CD4-positive, alpha-beta T cell (primary cell): ENCODE measurements at regions of chr5 and their contacts with region 1.

Region 1: GRCh38 chr5:90440644-90441043 is 31.1 kb upstream of the CETN3 start:
- DNase-seq: no peak
- ATAC-seq: no peak
- H3K4me3 ChIP-seq: no peak overlapping the region
- H3K4me3 Mint-ChIP-seq: no peak overlapping the region
- H3K27ac ChIP-seq: no peak overlapping the region
- H3K27ac Mint-ChIP-seq: no peak overlapping the region
- H3K4me1 ChIP-seq: peaks cover 3% of the 10 kb centered on the region
- H3K4me1 Mint-ChIP-seq: no peaks in the 10 kb centered on the region
- H3K27me3 ChIP-seq: no peaks in the 10 kb centered on the region
- H3K27me3 Mint-ChIP-seq: peaks cover 4% of the 10 kb centered on the region
- CTCF ChIP-seq: no peak

Region 2: DNA sequence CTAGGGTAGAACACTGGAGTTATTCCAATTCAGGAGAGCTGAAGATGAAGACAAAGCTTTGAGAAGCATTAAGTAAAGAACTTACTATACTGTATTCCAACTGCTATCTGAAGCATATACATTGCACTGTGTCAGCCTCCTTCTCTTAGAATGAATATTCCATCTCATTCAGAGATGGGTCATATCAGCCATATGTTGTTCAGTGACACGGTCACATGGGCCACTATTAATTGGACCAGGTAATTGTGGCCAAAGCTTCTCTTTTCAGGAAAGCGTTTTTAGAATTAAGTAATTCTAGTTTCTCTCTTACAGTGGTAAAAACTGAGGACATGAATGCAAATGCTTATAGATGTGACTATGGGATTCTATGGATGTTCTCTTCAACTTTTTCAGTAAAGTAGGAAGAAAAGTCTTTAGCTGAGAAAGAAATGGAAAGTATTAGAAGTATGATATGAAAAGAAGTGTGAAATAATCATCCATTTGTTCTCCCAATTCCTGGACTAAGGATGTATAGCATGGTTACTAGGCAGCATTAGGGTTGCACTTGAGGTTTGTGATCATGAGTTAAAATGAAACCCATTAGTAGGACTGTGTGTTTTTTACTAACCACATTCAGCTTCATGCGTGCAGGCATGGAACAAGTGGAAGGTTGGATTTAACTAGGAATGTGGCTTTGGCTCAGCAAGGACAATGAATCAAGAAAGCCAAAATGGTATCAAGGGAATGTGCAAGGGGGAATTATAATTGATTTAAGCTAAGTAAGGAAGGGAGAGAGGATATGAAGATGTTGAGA is 72.0 kb before region 1 on chr5:
- CTCF ChIA-PET with region 1: no interaction called
- POLR2A ChIA-PET with region 1: no interaction called
- intact Hi-C with region 1: no loop called
- DNase-seq: no peak
- ATAC-seq: no peak
- H3K4me3 ChIP-seq: no peak overlapping the region
- H3K4me3 Mint-ChIP-seq: no peak overlapping the region
- H3K27ac ChIP-seq: no peak overlapping the region
- H3K27ac Mint-ChIP-seq: no peak overlapping the region
- H3K4me1 ChIP-seq: no peaks in the 10 kb centered on the region
- H3K4me1 Mint-ChIP-seq: no peaks in the 10 kb centered on the region
- H3K27me3 ChIP-seq: peaks cover 0 to 4% of the 10 kb centered on the region in 2 experiments
- H3K27me3 Mint-ChIP-seq: peaks cover 33% of the 10 kb centered on the region
- CTCF ChIP-seq: no peak

Region 3: DNA sequence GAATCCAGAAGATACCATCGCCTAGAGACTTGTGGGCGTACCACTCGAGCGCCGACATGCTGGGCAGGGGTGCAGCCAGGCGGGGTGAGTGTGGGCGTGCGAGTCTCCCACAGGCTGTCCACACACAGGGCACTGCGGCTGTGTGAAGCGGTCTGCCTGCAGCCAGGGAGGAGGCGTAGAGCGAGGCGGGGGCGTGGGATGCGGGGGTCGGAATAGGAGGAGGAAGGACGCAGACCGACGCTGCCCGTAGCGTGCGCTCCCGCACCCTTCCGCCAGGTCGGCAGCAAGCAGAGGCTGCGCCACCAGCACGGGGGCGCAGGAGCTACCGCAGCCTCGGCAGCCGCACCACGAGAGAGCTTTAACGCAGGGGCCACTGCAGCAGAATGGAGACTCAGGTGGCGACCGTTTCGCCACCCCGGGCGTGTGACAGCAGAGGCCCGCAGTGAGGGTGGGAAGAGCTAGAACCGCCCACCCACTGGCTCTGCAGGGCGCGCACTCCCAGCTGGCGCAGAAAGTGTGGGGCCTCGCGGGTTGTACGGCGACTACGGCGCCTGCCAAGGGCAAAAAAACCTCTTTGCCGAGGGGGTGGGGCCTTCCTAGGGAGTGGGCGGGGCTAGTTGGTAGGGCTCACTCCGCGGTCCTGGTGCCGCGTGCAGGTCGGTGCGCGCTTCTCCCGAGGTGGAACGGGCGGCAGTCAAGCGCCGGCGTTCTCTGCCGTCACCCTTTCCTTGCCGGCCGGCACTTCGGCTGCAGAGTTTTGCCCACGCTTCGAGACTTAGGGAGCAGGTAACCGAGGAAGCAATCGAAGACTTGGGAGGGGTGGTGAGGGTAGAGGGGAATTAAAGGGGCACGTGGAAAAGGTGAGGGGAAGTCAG is 33.8 kb after region 1 on chr5 and contains the starts of genes MBLAC2 and POLR3G:
- CTCF ChIA-PET with region 1: interaction called, 9 read pairs
- POLR2A ChIA-PET with region 1: interaction called, 3 read pairs
- intact Hi-C with region 1: loop called in 1 of 2 experiments (anchors 2 kb)
- DNase-seq: peak; percentile 89 to 97 (median 93)
- ATAC-seq: peak; percentile 88
- H3K4me3 ChIP-seq: peak within 1 kb of the TSS; percentile 98
- H3K4me3 Mint-ChIP-seq: peak within 1 kb of the TSS; percentile 100
- H3K27ac ChIP-seq: peak within 1 kb of the TSS; percentile 70 to 74
- H3K27ac Mint-ChIP-seq: peak within 1 kb of the TSS; percentile 92
- H3K4me1 ChIP-seq: peaks cover 19% of the 10 kb centered on the region
- H3K4me1 Mint-ChIP-seq: peaks cover 48% of the 10 kb centered on the region
- H3K27me3 ChIP-seq: no peaks in the 10 kb centered on the region
- H3K27me3 Mint-ChIP-seq: no peaks in the 10 kb centered on the region
- CTCF ChIP-seq: peak; percentile 49
- total RNA-seq, gene MBLAC2: 3.9 to 4.1 TPM
- total RNA-seq, gene POLR3G: 0.80 to 2.3 TPM

Region 4: DNA sequence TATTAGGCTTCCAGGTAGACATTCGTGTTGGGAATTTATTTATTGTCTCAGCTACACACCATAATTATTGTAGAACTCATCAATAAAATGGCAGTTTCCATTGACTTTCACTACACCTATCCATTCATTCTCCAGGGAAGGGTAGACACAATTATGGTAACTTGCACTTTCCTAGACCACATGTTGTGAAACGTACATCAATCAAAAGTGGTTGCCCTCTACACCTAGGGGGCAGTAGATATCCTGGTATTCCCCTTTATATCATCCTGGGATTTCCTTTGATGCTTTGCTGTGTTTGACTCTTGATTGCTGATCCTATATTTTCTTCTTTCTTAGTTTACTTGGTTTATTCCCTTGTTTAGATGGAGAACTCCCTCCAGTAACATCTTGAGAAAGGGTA is 165.9 kb after region 1 on chr5:
- CTCF ChIA-PET with region 1: no interaction called
- POLR2A ChIA-PET with region 1: no interaction called
- intact Hi-C with region 1: loop called (anchors 5 to 10 kb)
- DNase-seq: no peak
- ATAC-seq: no peak
- H3K4me3 ChIP-seq: no peak overlapping the region
- H3K4me3 Mint-ChIP-seq: no peak overlapping the region
- H3K27ac ChIP-seq: no peak overlapping the region
- H3K27ac Mint-ChIP-seq: no peak overlapping the region
- H3K4me1 ChIP-seq: no peaks in the 10 kb centered on the region
- H3K4me1 Mint-ChIP-seq: no peaks in the 10 kb centered on the region
- H3K27me3 ChIP-seq: no peaks in the 10 kb centered on the region
- H3K27me3 Mint-ChIP-seq: peaks cover 41% of the 10 kb centered on the region
- CTCF ChIP-seq: no peak

Region 5: DNA sequence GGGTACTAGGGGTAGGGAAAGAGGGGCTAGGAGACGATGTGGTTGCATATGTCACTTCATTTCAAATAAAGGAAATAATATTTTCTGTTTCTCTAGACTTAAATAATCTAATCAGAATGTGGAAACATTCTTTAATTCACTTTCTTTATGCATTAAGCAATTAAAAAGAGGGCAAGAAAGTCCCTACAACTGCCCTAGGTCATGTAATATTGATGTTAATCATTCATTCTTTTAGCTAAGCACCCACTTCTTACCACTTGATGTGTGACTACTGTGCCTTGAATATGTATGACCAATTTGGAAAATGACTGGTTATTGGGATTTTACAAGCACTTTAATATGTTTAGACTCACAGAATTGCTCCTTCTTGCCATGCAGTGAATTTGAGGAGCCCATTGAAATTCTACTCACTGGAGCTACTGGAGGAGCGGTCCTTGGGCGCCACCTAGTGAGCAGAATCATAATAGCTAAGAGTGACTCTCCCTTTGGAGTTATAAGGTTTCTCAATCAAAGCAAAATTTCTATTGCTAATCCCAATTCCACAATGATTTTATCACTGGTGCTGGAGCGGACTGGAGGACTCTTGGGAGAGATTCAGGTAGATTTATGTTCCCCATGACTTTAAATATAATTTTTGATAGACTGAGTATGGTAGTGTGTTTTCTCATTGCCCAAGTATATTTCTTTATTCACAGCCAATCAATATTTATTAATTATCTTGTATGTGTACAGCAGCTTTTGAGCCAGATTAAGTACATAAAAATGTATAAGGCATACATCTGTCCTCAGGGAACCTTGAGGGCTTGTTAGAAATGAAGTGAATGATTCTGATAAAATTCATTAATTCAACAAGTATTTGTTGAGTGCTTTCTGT is 343.1 kb after region 1 on chr5:
- CTCF ChIA-PET with region 1: interaction called, 17 read pairs
- POLR2A ChIA-PET with region 1: no interaction called
- intact Hi-C with region 1: loop called in 1 of 2 experiments (anchors 2 kb)
- DNase-seq: peak; percentile 40 to 77 (median 60)
- ATAC-seq: peak; percentile 57
- H3K4me3 ChIP-seq: no peak overlapping the region
- H3K4me3 Mint-ChIP-seq: no peak overlapping the region
- H3K27ac ChIP-seq: no peak overlapping the region
- H3K27ac Mint-ChIP-seq: no peak overlapping the region
- H3K4me1 ChIP-seq: no peaks in the 10 kb centered on the region
- H3K4me1 Mint-ChIP-seq: no peaks in the 10 kb centered on the region
- H3K27me3 ChIP-seq: no peaks in the 10 kb centered on the region
- H3K27me3 Mint-ChIP-seq: peaks cover 14% of the 10 kb centered on the region
- CTCF ChIP-seq: peak; percentile 94